ENCODE measurements at regions of chr17 and their contacts with region 1.

Region 1: DNA sequence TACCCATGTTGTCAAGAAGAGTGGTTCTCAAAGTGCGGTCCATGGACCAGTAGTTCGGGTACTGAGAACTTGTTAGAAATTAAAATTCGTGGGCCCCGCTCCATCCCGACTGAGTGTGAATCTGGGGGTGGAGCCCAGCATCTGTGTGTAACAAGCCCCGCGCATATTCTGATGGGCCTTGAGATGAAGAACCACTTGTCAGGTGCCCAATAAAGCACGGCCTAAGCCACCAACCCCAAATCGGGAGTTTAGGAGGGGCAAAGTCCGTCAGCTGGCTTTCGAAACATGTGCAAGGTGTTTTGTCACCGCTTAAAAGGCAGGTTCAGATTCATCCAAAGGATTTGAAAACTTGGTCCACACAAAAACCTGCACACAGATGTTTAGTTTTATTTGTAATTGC is 29.5 kb downstream of the PSMD12 start:
- DNase-seq: no peak
- CTCF ChIP-seq: no peak

Region 2: DNA sequence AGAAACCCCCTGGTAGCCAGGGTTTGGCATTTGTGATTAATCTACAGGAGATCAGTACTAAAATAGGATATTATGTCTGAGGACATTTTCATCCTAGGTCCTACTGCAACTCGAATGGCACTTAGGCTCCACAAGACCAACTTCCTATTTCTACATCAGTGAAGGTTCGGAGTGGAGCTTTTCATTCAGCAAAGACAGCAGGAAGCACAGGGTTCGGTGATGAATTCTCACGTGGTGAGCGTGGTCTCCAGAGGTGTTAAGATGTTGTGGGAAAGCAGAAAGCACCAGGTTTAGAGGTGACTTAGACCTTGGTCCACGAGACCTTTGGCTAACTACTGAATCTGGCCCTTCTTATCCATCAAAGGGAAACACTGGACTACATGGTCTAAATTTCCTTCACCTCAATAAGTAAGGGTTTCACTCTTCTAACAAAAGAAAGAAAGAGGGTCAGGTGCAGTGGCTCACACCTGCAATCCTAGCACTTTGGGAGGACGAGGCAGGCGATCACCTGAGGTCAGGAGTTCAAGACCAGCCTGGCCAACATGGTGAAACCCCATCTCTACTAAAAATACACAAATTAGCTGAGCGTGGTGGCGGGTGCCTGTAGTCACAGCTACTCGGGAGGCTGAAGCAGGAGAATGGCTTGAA is 77.9 kb before region 1 on chr17:
- CTCF ChIA-PET with region 1: no interaction called
- POLR2A ChIA-PET with region 1: interaction called, 18 read pairs
- DNase-seq: no peak
- CTCF ChIP-seq: no peak

Region 3: DNA sequence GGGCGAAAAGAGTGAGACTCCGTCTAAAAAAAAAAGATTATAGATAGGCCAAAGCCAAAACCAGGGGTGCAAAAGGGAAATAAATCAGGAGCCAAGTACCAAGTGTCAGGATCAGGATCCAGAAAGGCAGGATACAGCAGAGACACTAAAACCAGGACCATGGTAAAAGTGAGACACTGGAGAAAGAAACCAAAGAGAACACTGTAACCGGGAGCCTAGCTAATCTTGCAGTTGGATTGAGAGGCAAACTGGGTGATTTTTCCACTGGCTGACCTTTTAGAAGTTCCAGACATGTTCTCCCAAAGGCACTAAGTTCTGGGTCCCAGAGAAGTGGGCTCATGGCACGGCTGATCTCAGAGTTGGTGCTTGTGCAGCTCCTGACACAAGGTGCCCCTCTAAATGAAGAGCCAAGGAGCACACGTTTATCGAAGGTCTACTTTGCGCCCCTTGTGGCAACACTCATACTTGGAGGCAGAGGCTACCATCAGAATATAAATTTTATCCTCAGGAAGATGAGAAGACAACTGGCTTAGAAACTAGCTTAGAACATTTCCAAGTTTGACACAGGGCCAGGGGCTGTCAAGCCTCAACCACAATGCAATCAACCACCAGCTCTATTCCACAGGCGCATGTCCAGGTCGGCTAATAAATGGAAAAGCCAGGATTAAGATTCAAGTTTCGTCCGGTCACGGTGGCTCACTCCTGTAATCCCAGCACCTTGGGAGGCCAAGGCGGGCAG is 64.4 kb before region 1 on chr17:
- CTCF ChIA-PET with region 1: no interaction called
- POLR2A ChIA-PET with region 1: interaction called, 13 read pairs
- DNase-seq: no peak
- CTCF ChIP-seq: peak; percentile 30